GM10248 (cell line): ENCODE measurements at regions of chr22 and their contacts with region 1.

Region 1: DNA sequence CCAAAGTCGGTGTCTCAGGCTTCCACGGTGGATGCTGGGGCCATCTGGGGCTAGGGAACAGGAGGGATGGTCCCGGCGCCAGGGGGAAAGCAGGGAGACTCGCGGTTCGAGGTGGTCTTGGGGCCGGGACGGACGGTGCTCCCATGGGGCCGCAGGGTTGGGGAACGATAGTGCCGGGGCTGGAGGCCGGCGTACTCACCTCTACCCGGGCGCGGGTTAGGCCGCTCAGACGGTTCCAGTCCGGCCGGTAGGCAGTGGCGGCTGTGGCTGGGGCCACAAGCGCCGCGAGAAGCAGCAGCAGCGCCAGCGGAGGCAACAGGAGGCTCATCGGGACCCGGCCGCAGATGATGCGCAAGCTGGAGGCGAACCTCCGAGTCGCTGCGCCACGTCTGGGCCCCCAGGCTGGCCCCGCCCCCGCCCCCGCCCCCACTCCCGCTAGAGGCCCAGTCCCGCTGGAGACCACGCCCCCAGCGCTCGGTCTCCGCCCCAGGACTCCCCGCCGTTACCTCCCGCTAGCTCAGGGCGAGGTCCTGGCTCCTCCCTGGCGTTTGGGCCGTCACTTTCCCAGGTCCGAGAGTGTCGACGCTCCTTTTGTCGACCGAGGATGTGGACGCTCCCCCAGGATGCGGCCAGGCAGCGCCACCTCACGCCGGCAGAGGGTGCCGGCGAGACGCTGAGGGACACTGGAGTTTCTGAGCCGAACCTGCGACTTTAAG is at the start of gene SELENOM:
- DNase-seq: peak; percentile 96
- CTCF ChIP-seq: peak; percentile 71

Region 2: DNA sequence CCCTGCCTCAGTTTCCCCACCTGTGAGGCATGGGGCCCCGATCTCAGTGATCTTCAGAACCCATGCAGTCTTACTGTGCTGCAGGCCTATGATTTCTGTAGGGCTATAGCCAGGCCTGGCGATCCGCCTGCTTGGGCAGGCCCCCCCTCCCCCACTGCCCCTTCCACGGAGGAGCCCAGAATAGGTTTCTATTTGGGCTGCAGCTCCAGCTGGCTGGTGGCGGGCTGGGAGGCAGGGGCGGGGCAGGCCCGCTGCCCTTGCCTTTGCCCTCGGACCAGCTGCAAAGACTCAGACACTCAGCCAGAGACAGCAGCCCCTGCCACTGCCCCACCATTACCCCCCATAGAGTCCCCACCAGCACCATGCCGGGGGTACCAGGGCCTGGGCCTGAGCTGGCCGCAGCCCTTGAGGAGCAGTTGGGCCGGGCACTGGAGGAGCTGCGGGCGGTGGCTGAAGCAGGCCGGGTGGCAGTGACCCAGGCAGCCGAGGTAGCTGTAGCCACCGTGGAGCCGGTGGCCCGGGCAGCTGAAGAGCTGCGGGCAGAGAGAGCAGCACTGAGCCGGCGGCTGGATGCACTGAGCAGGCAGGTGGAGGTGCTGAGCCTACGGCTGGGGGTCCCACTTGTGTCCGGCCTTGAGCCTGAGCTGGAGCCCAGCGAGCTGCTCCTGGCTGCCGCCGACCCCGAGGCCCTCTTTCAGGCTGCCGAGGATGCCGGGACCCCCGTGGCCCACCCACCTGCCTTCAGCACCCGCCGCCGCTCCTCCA is 14.1 kb before region 1 on chr22:
- CTCF ChIA-PET with region 1: interaction called, 16 read pairs
- POLR2A ChIA-PET with region 1: no interaction called
- DNase-seq: no peak
- CTCF ChIP-seq: no peak